ENCODE measurements at regions of chr11 and their contacts with region 1.

Region 1: DNA sequence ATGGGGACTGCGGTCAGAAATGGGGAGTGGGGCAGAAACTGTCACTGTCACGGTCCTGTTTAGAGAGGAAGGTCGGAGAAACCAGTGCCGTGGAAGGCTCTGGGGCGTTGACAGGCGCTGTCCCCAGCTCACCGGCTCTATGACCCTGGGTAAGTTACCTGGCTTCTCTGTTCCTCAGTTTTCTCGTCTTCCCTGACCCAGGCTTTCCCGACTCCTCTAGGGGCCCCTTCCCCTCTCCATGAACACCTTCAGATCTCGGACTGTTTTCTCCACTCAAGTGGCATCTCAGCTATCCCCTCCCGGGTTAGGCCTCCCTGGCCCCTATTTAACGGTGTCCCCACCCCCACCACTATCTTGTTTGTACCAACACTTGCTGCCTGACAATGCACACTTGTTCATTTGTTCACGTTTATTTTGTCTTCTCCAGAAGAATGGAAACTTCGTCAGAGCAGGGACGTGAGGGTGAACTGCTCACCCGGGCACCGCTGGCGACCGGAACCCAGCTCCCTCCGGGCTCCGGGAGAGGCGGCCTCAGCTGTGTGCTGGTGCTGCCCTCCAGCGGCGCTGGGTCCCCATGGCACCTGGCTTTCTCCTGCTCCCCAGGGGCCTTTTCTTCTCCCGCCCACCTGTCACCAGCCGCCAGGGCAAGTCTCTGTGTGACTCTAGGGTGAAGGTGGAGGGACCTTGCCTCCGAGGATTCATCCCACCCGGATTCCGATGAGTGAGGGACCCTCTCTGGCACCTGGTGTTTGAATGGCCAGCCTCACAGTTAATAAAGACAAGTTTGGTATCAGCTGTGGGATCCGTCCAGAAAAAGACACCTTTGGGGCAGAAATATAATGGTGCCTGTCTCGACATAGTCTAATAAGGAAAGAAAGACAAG is 33.1 kb upstream of the SLC35C1 start:
- DNase-seq: peak; percentile 87
- ATAC-seq: peak; percentile 94
- H3K4me3 Mint-ChIP-seq: peak overlapping the region; percentile 75
- H3K27ac Mint-ChIP-seq: peak overlapping the region; percentile 63
- H3K4me1 Mint-ChIP-seq: peaks cover 14% of the 10 kb centered on the region
- H3K27me3 Mint-ChIP-seq: peaks cover 4% of the 10 kb centered on the region

Region 2: GRCh38 chr11:45339729-45340519 is 431.9 kb before region 1 on chr11:
- CTCF ChIA-PET with region 1: interaction called, 28 read pairs
- POLR2A ChIA-PET with region 1: no interaction called
- DNase-seq: peak; percentile 94
- ATAC-seq: peak; percentile 99
- H3K4me3 Mint-ChIP-seq: peak overlapping the region; percentile 47
- H3K27ac Mint-ChIP-seq: peak overlapping the region; percentile 61
- H3K4me1 Mint-ChIP-seq: peaks cover 10% of the 10 kb centered on the region
- H3K27me3 Mint-ChIP-seq: peaks cover 20% of the 10 kb centered on the region

Region 3: DNA sequence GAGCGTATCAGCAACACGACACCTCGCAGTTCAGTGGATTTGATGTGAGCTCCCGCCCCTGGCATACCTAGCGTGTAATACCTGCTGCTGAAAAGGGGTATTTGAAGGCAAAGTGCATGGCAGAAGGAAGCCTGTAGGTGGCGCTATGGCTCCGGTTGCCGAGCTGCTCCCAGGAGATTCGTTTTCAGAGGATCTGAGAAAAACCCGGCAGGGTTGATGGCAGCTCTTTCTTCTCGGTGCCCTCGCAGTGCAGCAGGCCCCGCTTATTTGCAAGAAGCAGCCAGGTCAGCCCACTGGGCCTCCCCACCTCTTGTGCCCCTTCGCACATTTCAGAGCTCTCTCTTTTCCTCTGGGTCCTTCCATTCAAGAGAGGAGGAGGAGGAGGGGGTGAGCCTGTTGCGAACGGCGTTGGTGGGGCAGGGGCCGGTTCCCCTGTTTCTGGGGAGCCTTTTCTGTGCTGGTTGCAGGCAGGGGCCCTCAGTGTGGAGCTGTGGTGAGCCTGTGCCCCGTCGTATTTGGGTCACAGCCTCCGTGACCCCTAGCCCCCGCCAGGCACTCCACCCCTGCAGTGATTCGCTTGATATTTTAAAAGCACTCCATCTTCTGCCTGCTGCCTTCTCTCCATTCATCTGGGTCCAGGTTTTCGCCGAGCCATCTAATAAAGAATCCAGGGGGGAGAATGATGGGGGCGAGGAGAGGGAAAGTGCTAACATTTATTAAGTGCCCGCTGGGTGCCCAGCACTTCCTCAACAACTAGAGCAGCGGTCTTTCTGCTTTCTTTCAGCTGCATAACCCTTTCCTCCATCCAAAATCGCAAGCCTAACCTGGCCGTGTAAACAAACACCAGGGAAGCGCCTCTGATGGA is 400.3 kb before region 1 on chr11:
- CTCF ChIA-PET with region 1: interaction called, 52 read pairs
- POLR2A ChIA-PET with region 1: no interaction called
- DNase-seq: peak; percentile 71
- ATAC-seq: peak; percentile 41
- H3K4me3 Mint-ChIP-seq: no peak overlapping the region
- H3K27ac Mint-ChIP-seq: no peak overlapping the region
- H3K4me1 Mint-ChIP-seq: peaks cover 8% of the 10 kb centered on the region
- H3K27me3 Mint-ChIP-seq: peaks cover 16% of the 10 kb centered on the region

Region 4: DNA sequence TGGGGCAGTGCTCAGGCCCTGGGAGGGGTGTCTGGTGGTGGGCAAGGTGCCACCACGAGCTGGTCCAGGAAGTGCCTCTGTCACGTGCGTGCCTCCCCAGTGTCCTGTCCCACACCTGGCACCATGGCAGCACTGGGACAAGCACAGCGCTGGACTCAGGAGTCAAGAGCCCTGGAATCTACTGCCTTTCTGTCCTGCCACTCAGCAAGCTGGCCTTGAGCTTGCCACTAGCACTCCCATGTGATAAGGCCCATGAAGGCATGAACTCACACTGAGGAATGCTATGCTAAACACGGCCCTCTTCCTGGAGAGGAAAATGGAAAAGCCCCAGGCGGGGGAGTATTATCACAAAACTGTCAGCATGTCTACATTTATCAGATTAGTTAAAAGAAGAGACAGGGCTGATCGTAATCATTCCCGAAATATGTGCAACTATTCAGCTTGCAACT is 17.5 kb before region 1 on chr11:
- CTCF ChIA-PET with region 1: interaction called, 10 read pairs
- POLR2A ChIA-PET with region 1: no interaction called
- DNase-seq: no peak
- ATAC-seq: no peak
- H3K4me3 Mint-ChIP-seq: no peak overlapping the region
- H3K27ac Mint-ChIP-seq: no peak overlapping the region
- H3K4me1 Mint-ChIP-seq: no peaks in the 10 kb centered on the region
- H3K27me3 Mint-ChIP-seq: peaks cover 11% of the 10 kb centered on the region

Region 5: GRCh38 chr11:45798793-45799441 is 27.1 kb after region 1 on chr11:
- CTCF ChIA-PET with region 1: interaction called, 33 read pairs
- POLR2A ChIA-PET with region 1: no interaction called
- DNase-seq: no peak
- ATAC-seq: no peak
- H3K4me3 Mint-ChIP-seq: no peak overlapping the region
- H3K27ac Mint-ChIP-seq: no peak overlapping the region
- H3K4me1 Mint-ChIP-seq: peaks cover 4% of the 10 kb centered on the region
- H3K27me3 Mint-ChIP-seq: peaks cover 5% of the 10 kb centered on the region

Region 6: DNA sequence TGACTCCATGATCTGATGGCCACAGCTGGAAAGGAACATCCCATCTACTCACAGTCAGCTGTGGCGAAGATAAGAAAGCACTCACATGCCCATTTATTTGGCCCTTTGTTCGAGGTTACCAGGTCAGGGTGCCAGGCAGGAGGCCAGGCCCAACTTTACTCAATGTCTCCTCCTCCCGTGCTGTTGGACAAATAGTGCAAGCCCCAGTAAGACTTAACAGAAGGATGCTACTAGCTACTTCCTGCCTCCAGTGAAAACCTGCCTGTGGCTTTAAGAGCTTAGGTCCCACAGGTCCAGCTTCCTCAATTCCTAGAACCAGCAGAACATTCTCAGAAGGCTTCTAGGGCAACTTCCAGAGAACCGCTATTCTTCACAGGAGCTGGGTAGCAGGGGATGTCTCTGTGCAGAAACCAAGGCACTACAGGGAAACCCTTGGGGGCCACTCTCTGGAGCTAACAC is 62.5 kb after region 1 on chr11:
- CTCF ChIA-PET with region 1: interaction called, 11 read pairs
- POLR2A ChIA-PET with region 1: no interaction called
- DNase-seq: peak; percentile 78
- ATAC-seq: peak; percentile 96
- H3K4me3 Mint-ChIP-seq: peak overlapping the region; percentile 74
- H3K27ac Mint-ChIP-seq: peak overlapping the region; percentile 98
- H3K4me1 Mint-ChIP-seq: peaks cover 53% of the 10 kb centered on the region
- H3K27me3 Mint-ChIP-seq: peaks cover 18% of the 10 kb centered on the region

Region 7: GRCh38 chr11:46006418-46007070 is 234.7 kb after region 1 on chr11:
- CTCF ChIA-PET with region 1: interaction called, 21 read pairs
- POLR2A ChIA-PET with region 1: no interaction called
- DNase-seq: peak; percentile 57
- ATAC-seq: peak; percentile 76
- H3K4me3 Mint-ChIP-seq: no peak overlapping the region
- H3K27ac Mint-ChIP-seq: no peak overlapping the region
- H3K4me1 Mint-ChIP-seq: no peaks in the 10 kb centered on the region
- H3K27me3 Mint-ChIP-seq: no peaks in the 10 kb centered on the region